Activated naive CD4-positive, alpha-beta T cell treated with anti-CD3 and anti-CD28 coated beads for 36 hours (primary cell): ENCODE measurements at regions of chr11 and their contacts with region 1.

Region 1: DNA sequence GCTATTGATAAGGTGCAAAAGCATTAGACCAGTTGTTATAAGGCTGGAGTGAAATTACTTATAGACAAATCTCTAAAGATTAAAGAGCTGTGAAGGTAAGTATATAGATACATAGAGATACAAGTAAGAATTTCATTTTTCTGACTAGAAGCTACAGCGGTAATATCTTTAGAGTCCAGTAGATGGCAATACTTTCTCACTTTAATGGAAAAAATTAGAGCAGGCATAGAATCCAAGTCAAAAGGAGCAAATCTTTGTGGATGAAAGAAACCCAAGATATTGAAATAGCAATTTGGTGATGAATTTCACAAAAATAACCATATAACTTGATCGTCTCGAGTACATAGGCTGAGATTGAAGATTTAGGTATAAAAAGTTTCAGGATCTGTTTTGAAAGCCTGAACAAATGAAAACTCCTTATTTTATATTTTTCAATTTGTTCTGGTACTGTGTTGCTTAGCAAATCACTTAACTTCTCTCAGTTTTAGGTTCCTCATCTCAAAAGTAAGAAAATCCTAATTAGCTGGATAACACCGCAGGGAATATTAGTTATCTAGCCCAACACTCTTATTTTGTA is 81.9 kb downstream of the UVRAG start:
- DNase-seq: no peak
- H3K4me3 Mint-ChIP-seq: no peak overlapping the region
- H3K27ac Mint-ChIP-seq: no peak overlapping the region
- H3K4me1 Mint-ChIP-seq: peaks cover 23% of the 10 kb centered on the region
- H3K27me3 Mint-ChIP-seq: no peaks in the 10 kb centered on the region

Region 2: DNA sequence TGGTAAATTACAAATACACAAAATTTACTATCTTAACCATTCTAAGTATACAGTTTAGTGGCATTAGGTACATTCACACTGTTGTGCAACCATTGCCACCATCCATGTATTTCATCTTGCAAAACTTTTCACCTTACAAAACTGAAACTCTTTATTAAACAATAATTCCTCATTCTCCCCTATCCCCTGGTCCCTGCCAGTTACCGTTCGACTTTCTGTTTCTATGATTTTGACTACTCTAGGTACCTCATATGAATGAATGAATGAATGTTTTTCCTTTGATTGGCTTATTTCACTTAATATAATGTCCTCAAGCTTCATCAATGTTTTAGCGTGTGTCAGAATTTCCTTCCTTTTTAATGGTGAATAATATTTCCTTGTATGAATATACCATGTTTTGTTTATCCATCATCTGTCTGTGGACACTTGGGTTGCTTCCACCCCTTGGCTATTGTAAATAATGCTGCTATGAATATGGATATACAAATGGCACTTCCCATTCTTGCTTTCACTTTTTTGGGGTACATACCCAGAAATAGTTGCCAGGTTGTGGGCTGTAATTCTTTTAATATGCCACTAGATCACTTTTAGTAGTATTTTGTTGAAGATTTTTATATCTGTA is 11.1 kb after region 1 on chr11:
- CTCF ChIA-PET with region 1: interaction called, 3 read pairs
- intact Hi-C with region 1: loop called (anchors 1 kb)
- DNase-seq: no peak
- H3K4me3 Mint-ChIP-seq: no peak overlapping the region
- H3K27ac Mint-ChIP-seq: no peak overlapping the region
- H3K4me1 Mint-ChIP-seq: peaks cover 19% of the 10 kb centered on the region
- H3K27me3 Mint-ChIP-seq: no peaks in the 10 kb centered on the region

Region 3: GRCh38 chr11:76131671-76132631 is 235.0 kb after region 1 on chr11:
- CTCF ChIA-PET with region 1: interaction called, 9 read pairs
- intact Hi-C with region 1: loop called (anchors 5 kb)
- DNase-seq: no peak
- H3K4me3 Mint-ChIP-seq: no peak overlapping the region
- H3K27ac Mint-ChIP-seq: peak overlapping the region; percentile 54
- H3K4me1 Mint-ChIP-seq: peaks cover 36% of the 10 kb centered on the region
- H3K27me3 Mint-ChIP-seq: no peaks in the 10 kb centered on the region

Region 4: GRCh38 chr11:76371170-76371569 is 474.2 kb after region 1 on chr11:
- CTCF ChIA-PET with region 1: interaction called, 3 read pairs
- intact Hi-C with region 1: loop called (anchors 5 kb)
- DNase-seq: peak; percentile 72
- H3K4me3 Mint-ChIP-seq: no peak overlapping the region
- H3K27ac Mint-ChIP-seq: peak overlapping the region; percentile 62
- H3K4me1 Mint-ChIP-seq: peaks cover 55% of the 10 kb centered on the region
- H3K27me3 Mint-ChIP-seq: no peaks in the 10 kb centered on the region